ENCODE measurements at regions of chr16 and their contacts with region 1.

Region 1: GRCh38 chr16:10579965-10580882 is at the start of gene EMP2:
- DNase-seq: peak; percentile 31 to 90
- H3K4me3 ChIP-seq: peak within 1 kb of the TSS; percentile 41 to 85 (median 62)
- H3K27ac ChIP-seq: peak within 1 kb of the TSS; percentile 33; the same call in 1 of the 2 replicates
- H3K4me1 ChIP-seq: peaks cover 15 to 39% (median 22%) of the 10 kb centered on the region in 4 experiments
- H3K27me3 ChIP-seq: no peaks in the 10 kb centered on the region
- CTCF ChIP-seq: peak; percentile 77 to 80 (median 79)
- EP300 ChIP-seq: 0 out of 3 replicates have a peak, but pooled peaks of 1 of the 2 experiments have one; percentile 49
- POLR2A ChIP-seq: peak in 1 of 2 experiments; percentile 51; a peak in 1 of 3 replicates
- RAD21 ChIP-seq: peak; percentile 63 to 75
- total RNA-seq, gene EMP2: 21.8 and 22.6 TPM in 2 replicates

Region 2: GRCh38 chr16:10103118-10103517 is 477.1 kb before region 1 on chr16:
- CTCF ChIA-PET with region 1: no interaction called
- POLR2A ChIA-PET with region 1: no interaction called
- DNase-seq: no peak
- H3K4me3 ChIP-seq: no peak overlapping the region
- H3K27ac ChIP-seq: no peak overlapping the region
- H3K4me1 ChIP-seq: no peaks in the 10 kb centered on the region
- H3K27me3 ChIP-seq: peaks cover 0 to 1% (median 0%) of the 10 kb centered on the region in 4 experiments; a peak in 1 of 7 replicates
- CTCF ChIP-seq: no peak
- EP300 ChIP-seq: no peak
- POLR2A ChIP-seq: no peak
- RAD21 ChIP-seq: no peak

Region 3: DNA sequence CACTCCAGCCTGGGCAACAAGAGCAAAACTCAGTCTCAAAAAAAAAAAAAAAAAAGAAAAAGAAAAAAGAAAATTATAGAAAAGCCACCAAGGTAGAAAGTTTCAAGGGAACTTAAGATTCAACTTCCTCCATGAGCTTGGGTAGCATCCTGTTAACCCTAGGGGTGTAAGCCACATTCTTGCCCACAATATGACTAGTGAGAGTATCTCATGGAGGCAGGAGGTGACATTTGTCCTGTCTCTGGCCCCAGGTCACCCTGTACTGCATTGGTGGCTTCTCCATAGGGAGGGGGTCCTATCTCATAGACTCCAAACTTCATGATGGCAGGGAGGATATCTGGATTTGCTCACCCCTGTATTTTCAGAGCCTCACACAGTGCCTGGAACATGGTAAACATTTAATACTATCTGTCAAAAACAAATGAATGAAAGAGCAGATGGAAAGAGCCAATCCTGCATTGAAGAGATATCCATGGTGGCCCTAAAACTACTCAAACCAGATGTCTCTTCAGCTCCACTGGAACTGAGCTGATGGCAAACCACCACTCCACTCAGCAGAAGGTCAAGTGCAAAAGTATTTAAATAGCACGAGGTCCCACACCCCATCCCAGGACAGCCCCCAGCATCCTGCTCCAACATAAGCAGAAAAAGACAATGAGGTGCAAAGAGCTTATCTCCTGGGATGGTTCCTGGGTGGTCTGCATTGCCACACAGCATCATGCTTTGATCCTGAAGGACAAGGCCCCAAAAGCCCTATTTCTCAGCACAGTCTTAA is 50.1 kb before region 1 on chr16:
- CTCF ChIA-PET with region 1: no interaction called
- POLR2A ChIA-PET with region 1: no interaction called
- DNase-seq: no peak
- H3K4me3 ChIP-seq: no peak overlapping the region
- H3K27ac ChIP-seq: no peak overlapping the region
- H3K4me1 ChIP-seq: no peaks in the 10 kb centered on the region
- H3K27me3 ChIP-seq: no peaks in the 10 kb centered on the region
- CTCF ChIP-seq: no peak
- EP300 ChIP-seq: no peak
- POLR2A ChIP-seq: no peak
- RAD21 ChIP-seq: no peak

Region 4: DNA sequence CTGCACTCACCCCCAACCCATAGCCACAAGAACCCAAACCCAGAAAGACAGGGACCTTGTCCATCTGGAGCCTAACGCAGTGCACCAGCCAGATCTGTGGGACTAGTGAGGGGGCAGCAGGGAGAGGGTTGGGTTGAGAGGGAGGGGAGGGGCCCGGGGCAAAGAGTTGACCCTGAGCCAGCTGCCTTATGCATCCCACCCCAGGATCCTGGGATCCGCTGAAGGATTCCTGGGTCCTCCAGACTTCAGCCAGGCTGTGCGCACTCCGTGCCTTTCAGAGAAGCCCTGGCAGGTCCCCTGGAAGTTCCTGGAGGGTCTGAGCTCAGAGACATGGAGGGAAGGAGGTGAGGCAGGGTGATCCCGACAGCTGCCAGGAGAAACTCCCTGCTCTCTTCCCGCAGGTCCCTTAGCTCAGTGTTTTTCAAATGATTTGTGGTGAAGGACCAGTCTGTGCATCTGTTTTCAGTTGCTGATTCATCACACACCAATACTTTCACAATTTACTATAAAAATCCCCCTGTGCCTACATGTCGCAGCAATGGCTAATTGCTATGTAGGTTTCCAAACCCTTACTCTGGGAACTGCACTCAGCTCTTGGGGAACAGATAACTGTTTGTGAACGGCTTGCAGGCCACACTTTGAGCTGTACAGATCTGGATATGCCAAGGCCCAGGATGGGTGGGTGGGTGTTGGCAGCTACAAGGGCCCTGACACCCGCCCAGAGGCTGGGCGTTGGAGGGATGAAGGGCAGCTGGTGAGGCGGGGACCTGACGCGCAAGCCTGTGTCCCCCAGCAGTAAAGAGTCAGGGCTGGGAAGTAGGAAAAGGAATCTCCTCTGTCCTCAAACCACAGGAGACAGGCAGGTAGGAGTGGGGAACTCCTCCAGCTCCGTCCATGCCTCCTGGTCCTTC is 20.6 kb after region 1 on chr16:
- CTCF ChIA-PET with region 1: interaction called, 22 read pairs
- POLR2A ChIA-PET with region 1: no interaction called
- DNase-seq: no peak
- H3K4me3 ChIP-seq: no peak overlapping the region
- H3K27ac ChIP-seq: no peak overlapping the region
- H3K4me1 ChIP-seq: peaks cover 0 to 3% (median 0%) of the 10 kb centered on the region in 4 experiments; a peak in 2 of 7 replicates
- H3K27me3 ChIP-seq: no peaks in the 10 kb centered on the region; a peak in 1 of 7 replicates
- CTCF ChIP-seq: no peak
- EP300 ChIP-seq: no peak
- POLR2A ChIP-seq: no peak
- RAD21 ChIP-seq: no peak

Region 5: DNA sequence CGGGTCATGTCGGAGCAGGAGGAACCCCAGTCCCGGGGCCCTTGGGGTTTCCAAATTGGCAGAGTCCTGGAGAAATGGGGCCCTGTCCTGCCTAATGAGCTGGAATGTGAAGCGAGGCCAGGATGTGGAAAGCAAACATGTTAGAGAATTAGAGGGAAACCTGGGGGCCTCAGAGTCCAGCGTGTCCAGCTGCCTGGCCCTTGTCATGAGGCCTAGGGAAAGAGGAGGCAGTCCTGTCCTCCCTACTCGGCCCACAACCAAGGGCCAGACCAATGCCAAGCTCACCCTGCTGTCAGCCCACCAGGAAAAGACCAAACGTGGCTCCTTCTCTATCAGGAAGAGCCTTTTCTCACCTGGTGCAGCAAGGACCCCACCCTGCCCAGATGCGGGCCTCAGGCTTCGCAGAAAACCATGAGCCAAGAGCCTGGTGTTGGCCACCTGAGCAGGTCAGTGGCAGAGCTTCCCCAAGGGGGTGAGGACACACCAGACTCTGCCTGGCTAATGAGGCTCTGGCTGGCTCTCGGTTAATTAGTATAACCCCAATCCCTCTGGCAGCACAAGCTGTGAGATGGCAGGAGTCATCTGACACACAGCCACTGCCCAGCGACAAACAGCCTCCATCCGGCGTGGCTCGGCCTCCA is 104.4 kb after region 1 on chr16:
- CTCF ChIA-PET with region 1: no interaction called
- POLR2A ChIA-PET with region 1: no interaction called
- DNase-seq: no peak
- H3K4me3 ChIP-seq: no peak overlapping the region
- H3K27ac ChIP-seq: no peak overlapping the region
- H3K4me1 ChIP-seq: no peaks in the 10 kb centered on the region
- H3K27me3 ChIP-seq: no peaks in the 10 kb centered on the region
- CTCF ChIP-seq: no peak
- EP300 ChIP-seq: no peak
- POLR2A ChIP-seq: no peak
- RAD21 ChIP-seq: no peak

Measured in H1 (cell line).